H1 (cell line): ENCODE measurements at regions of chr9 and their contacts with region 1.

Region 1: GRCh38 chr9:89602978-89603766 is 1.6 kb upstream of the GADD45G start:
- DNase-seq: peak; percentile 86 to 95
- H3K4me3 ChIP-seq: peak overlapping the region; percentile 3 to 86 (median 64); a peak in 7 of 8 replicates
- H3K27ac ChIP-seq: no peak overlapping the region
- H3K4me1 ChIP-seq: peaks cover 0 to 13% (median 9%) of the 10 kb centered on the region in 4 experiments; a peak in 5 of 7 replicates
- H3K27me3 ChIP-seq: peaks cover 0 to 18% (median 13%) of the 10 kb centered on the region in 4 experiments; a peak in 5 of 7 replicates
- CTCF ChIP-seq: peak; percentile 74 to 96 (median 86)
- EP300 ChIP-seq: no peak
- POLR2A ChIP-seq: no peak
- RAD21 ChIP-seq: peak; percentile 96 to 98

Region 2: GRCh38 chr9:89519373-89519805 is 83.8 kb before region 1 on chr9:
- CTCF ChIA-PET with region 1: no interaction called
- POLR2A ChIA-PET with region 1: no interaction called
- DNase-seq: no peak
- H3K4me3 ChIP-seq: no peak overlapping the region
- H3K27ac ChIP-seq: no peak overlapping the region
- H3K4me1 ChIP-seq: no peaks in the 10 kb centered on the region
- H3K27me3 ChIP-seq: no peaks in the 10 kb centered on the region
- CTCF ChIP-seq: no peak
- EP300 ChIP-seq: no peak
- POLR2A ChIP-seq: no peak
- RAD21 ChIP-seq: no peak

Region 3: DNA sequence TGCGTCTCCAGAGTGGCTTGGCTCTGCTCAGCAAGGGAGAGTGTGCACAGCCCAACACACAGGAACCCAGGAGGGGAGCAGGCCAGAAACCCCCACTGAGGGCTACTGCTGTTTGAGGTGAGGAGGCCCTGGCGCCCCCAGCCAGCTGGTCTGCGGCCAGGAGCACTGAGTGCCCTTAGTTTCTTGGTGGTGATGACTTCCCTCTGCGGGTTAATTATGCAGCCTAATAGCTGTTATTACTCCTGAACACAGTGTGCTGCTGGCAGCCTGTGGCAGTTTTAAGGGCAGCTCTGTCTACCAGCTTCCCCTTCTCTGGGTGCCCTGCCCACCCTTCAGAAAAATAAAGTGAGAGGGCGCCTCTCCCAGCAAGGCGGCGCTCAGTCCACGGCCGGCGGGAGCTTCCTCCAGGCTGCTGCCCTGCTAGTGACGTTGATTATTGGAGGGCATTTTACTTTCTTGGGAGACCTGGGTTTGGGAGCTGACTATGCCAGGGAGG is 20.8 kb after region 1 on chr9:
- CTCF ChIA-PET with region 1: interaction called, 65 read pairs
- POLR2A ChIA-PET with region 1: interaction called, 107 read pairs
- DNase-seq: no peak
- H3K4me3 ChIP-seq: no peak overlapping the region
- H3K27ac ChIP-seq: no peak overlapping the region
- H3K4me1 ChIP-seq: peaks cover 0 to 17% (median under 1%) of the 10 kb centered on the region in 4 experiments; a peak in 5 of 7 replicates
- H3K27me3 ChIP-seq: no peaks in the 10 kb centered on the region; a peak in 3 of 7 replicates
- CTCF ChIP-seq: no peak
- EP300 ChIP-seq: no peak
- POLR2A ChIP-seq: no peak
- RAD21 ChIP-seq: no peak

Region 4: DNA sequence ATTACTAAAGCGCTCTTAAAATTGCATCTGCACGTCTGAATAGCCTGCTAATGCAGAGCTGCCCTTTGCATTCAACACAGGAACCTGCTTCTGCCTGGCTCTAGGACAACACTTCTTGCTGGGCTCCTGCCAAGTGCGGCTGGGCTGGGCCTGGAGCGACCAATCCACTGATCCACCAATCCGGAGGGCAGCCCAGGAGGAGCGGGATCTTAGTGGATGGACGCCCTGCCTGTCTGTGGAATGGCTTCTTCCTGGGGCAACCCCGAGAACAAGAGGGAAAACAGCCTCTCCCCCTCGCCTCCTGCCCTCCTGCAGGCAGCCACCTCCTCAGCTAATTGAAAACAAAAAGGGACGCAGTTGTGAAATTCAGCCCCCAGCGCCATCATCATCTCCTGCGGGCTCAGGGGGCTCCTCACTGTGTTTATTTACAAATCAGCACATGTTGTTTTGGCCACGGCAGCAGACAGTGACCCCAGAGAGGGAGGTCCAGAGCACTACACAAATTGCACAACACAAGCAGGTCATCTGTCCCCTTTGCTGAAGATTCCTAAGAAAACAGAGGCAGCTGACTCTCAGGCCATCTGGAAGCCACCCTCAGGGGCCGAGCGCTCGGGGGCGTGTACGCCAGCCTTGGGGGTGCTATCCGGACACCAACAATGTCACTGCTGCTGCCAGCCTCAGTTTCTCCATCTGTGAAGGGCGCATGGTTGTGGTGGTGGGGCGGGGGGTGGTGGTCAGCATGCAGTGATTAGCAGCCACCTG is 59.0 kb after region 1 on chr9:
- CTCF ChIA-PET with region 1: interaction called, 11 read pairs
- POLR2A ChIA-PET with region 1: interaction called, 10 read pairs
- DNase-seq: peak; percentile 71 to 95
- H3K4me3 ChIP-seq: no peak overlapping the region; a peak in 2 of 8 replicates
- H3K27ac ChIP-seq: no peak overlapping the region
- H3K4me1 ChIP-seq: peaks cover 8 to 25% (median 13%) of the 10 kb centered on the region in 4 experiments
- H3K27me3 ChIP-seq: peaks cover 0 to 2% (median 0%) of the 10 kb centered on the region in 4 experiments; a peak in 1 of 7 replicates
- CTCF ChIP-seq: no peak
- EP300 ChIP-seq: no peak
- POLR2A ChIP-seq: no peak
- RAD21 ChIP-seq: no peak

Region 5: DNA sequence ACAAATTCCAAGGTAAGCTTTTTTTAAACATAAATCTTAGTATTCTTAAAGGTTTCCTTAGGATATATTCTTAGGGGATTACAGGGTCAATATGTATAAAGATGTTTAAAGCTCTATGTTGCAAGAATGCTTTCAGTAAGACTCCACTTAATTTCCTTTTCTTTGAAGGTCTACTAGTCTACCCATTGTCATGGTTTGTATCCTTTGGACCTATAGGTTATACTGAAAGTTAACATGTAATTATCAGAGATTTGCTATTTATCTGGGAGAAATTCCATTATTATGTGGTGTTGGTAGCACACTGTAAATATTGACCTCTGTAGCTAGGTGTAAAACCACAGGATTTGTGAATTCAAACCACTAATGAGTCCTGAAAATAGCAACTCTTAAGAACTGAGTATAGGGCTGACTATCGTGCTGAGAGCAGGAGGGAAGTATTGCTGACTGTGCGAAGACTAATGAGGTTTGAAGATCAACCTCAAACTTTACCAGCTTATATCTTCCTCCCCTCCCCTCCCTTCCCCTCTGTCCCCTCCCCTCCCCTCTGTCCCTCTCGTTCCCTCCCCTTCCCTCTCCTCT is 87.3 kb after region 1 on chr9:
- CTCF ChIA-PET with region 1: interaction called, 14 read pairs
- POLR2A ChIA-PET with region 1: interaction called, 10 read pairs
- DNase-seq: no peak
- H3K4me3 ChIP-seq: no peak overlapping the region
- H3K27ac ChIP-seq: no peak overlapping the region
- H3K4me1 ChIP-seq: peaks cover 3 to 18% (median 10%) of the 10 kb centered on the region in 4 experiments
- H3K27me3 ChIP-seq: no peaks in the 10 kb centered on the region
- CTCF ChIP-seq: no peak
- EP300 ChIP-seq: no peak
- POLR2A ChIP-seq: no peak
- RAD21 ChIP-seq: no peak

Region 6: GRCh38 chr9:89743573-89744361 is 140.6 kb after region 1 on chr9:
- CTCF ChIA-PET with region 1: interaction called, 37 read pairs
- POLR2A ChIA-PET with region 1: interaction called, 25 read pairs
- DNase-seq: peak; percentile 9 to 61
- H3K4me3 ChIP-seq: no peak overlapping the region
- H3K27ac ChIP-seq: no peak overlapping the region
- H3K4me1 ChIP-seq: peaks cover 0 to 9% (median under 1%) of the 10 kb centered on the region in 4 experiments; a peak in 4 of 7 replicates
- H3K27me3 ChIP-seq: no peaks in the 10 kb centered on the region
- CTCF ChIP-seq: peak; percentile 24 to 41 (median 34); a peak in 3 of 4 replicates
- EP300 ChIP-seq: no peak
- POLR2A ChIP-seq: no peak
- RAD21 ChIP-seq: peak; percentile 27 to 45; a peak in 2 of 4 replicates

Region 7: GRCh38 chr9:89911721-89912604 is 308.8 kb after region 1 on chr9:
- CTCF ChIA-PET with region 1: interaction called, 30 read pairs
- POLR2A ChIA-PET with region 1: interaction called, 3 read pairs
- DNase-seq: no peak
- H3K4me3 ChIP-seq: no peak overlapping the region
- H3K27ac ChIP-seq: no peak overlapping the region
- H3K4me1 ChIP-seq: peaks cover 0 to 4% (median 0%) of the 10 kb centered on the region in 4 experiments; a peak in 1 of 7 replicates
- H3K27me3 ChIP-seq: no peaks in the 10 kb centered on the region
- CTCF ChIP-seq: peak in 2 of 3 experiments; percentile 18 to 38; a peak in 2 of 4 replicates
- EP300 ChIP-seq: no peak
- POLR2A ChIP-seq: no peak
- RAD21 ChIP-seq: peak; percentile 24 to 38

Region 8: GRCh38 chr9:90095682-90096081 is 492.5 kb after region 1 on chr9:
- CTCF ChIA-PET with region 1: interaction called, 162 read pairs
- POLR2A ChIA-PET with region 1: interaction called, 8 read pairs
- DNase-seq: no peak
- H3K4me3 ChIP-seq: no peak overlapping the region
- H3K27ac ChIP-seq: no peak overlapping the region
- H3K4me1 ChIP-seq: peaks cover 0 to 3% (median 0%) of the 10 kb centered on the region in 4 experiments; a peak in 1 of 7 replicates
- H3K27me3 ChIP-seq: no peaks in the 10 kb centered on the region; a peak in 1 of 7 replicates
- CTCF ChIP-seq: no peak
- EP300 ChIP-seq: no peak
- POLR2A ChIP-seq: no peak
- RAD21 ChIP-seq: no peak

Region 9: DNA sequence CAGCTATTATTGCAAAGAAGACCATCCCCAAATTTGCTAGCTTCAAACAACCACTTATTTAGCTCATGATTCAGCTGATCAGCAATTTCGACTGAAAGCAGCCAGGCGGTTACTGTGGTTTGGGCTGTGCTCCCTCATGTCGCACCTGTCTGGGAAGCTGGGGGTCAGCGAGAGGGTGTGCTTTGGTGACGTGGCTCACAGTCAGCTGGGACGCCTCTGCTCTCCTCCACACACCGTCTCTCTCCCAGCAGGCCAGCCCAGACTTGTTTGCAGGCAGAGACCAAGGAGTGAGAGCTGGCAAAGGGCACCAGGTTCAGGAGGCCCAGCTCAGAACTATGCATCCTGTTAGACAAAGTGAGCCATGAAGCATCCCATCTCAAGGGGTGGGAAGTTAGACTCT is 1339.4 kb after region 1 on chr9:
- CTCF ChIA-PET with region 1: no interaction called
- POLR2A ChIA-PET with region 1: no interaction called
- DNase-seq: no peak
- H3K4me3 ChIP-seq: no peak overlapping the region
- H3K27ac ChIP-seq: no peak overlapping the region
- H3K4me1 ChIP-seq: no peaks in the 10 kb centered on the region
- H3K27me3 ChIP-seq: no peaks in the 10 kb centered on the region
- CTCF ChIP-seq: no peak
- EP300 ChIP-seq: no peak
- POLR2A ChIP-seq: no peak
- RAD21 ChIP-seq: no peak